Left cardiac atrium (tissue), 4 donors: ENCODE measurements at regions of chr14 and their contacts with region 1.

Region 1: GRCh38 chr14:100662879-100663760 is 63.6 kb upstream of the DLK1 start:
- DNase-seq: peak; percentile 66
- ATAC-seq: peak in 1 of 2 donors; percentile 52

Region 2: GRCh38 chr14:100899854-100900771 is 237.0 kb after region 1 on chr14:
- intact Hi-C with region 1: loop called in 1 of 2 experiments (anchors 10 kb)
- DNase-seq: no peak
- ATAC-seq: peak; percentile 25 to 73

Region 3: DNA sequence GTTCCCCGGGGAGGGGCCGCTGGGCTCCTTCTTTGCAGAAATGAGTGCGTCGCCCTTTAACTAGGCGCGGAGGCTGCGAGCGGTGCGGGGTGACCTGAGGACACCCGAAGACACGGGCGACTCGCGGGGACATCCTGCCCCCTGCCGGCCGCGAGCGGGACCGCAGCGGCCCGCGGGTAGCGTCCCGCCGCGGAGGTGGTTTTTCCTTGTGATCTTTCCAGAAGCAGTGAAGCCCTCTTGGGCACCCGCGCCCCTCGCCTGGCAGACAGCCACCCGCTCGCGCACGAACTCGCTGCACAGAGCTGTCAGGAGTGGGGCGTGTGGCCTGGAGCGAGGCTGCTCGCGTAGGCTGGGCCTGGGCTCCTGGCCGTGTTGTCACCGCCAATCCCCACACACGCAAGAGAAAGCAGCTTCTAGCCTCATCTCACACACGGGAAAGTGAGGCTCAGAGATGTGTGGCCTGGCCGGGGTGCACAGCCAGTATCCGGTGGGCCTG is 965.4 kb after region 1 on chr14:
- intact Hi-C with region 1: loop called (anchors 5 kb)
- DNase-seq: peak; percentile 81
- ATAC-seq: peak; percentile 92 to 93